ENCODE measurements at regions of chr4 and their contacts with region 1.

Region 1: GRCh38 chr4:148757171-148757570 is 315.0 kb upstream of the NR3C2 start:
- DNase-seq: no peak
- ATAC-seq: no peak

Region 2: DNA sequence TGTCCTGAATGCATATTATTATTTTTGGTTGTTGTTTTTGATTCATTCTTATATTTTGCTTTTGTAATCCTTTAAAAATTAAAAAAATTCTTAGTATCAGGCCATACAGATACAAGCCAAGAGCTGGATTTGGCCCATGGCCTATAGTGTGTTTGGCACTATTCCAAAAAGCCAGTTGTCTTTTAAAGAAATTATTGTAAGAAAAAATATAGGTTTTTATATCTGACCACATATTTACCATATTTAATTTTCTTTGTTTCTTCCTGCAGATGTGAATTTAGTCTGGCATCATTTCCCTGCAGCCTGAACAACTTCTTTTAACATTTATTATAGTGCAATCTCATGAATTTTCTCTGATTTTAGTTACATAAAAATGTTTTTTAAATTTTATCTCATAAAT is 337.8 kb after region 1 on chr4:
- intact Hi-C with region 1: no loop called
- DNase-seq: no peak
- ATAC-seq: no peak

Region 3: GRCh38 chr4:149741186-149741831 is 984.1 kb after region 1 on chr4:
- intact Hi-C with region 1: loop called (anchors 10 kb)
- DNase-seq: no peak
- ATAC-seq: no peak